Right cardiac atrium (tissue), 5 donors: ENCODE measurements at regions of chr9 and their contacts with region 1.

Region 1: DNA sequence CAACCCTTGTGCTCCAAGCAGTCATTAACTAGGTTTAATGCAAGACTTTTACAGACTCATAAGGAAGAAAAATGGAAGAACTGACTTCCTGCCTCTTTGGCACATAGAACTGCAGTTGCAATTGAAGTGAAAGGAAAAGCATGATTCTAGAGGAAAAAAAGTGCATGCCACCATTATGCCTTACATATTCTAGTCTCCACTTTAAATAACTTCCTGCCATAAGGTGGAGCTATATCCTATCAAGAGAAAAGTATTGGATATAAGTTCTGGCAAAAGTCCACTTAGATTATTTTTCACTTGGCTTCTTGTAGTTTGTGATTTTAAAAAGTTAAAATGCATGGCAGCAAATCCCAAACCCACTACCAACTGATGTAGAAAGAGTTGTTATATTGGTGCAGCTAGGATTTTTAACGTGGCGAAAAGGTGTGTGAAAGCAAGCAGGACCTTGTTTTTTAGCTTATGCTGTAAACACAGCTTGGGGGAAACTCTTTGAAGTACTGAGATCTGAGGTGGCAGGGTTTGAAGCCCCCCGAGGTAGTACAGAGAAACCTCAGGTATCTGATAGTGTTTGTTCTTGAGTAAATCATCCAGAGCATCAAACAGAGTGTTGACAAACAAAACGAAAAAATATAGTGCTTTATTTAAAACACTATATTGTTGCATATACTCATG is 117.9 kb downstream of the ANXA1 start:
- DNase-seq: no peak
- ATAC-seq: no peak
- H3K4me3 ChIP-seq: no peak overlapping the region
- H3K27ac ChIP-seq: no peak overlapping the region
- H3K4me1 ChIP-seq: no peaks in the 10 kb centered on the region
- H3K27me3 ChIP-seq: no peaks in the 10 kb centered on the region

Region 2: DNA sequence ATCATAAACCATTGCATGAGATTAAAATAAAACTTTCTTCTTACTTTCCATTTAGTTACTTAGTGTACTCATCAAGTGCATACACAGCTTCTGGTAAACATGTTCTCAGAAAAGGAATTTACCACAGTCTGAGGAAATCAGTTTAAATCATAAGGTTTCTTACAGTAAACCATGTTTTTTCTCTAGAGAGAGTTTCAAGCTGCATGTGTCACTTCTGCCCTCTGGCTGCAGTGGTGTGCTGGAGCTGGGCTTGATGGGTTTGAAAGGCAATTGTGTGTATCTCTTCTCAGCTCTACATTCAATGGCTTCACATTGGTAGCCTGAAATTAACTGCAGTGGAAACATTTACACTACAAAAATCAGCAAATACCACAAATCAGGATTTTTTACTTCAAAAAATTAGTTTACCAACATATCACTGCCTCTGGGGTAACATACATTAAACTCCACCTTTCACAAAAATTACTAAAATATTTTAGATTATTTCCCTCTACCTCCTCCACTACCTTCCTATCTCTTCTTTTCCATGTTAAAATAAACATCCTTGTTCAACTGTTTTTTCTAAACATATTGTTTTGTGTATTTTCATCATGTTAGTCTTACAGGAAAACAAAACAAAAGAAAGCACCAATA is 296.4 kb after region 1 on chr9:
- intact Hi-C with region 1: loop called in 1 of 4 experiments (anchors 5 kb)
- DNase-seq: peak in 2 of 3 donors; percentile 34 to 36
- ATAC-seq: no peak
- H3K4me3 ChIP-seq: no peak overlapping the region
- H3K27ac ChIP-seq: no peak overlapping the region
- H3K4me1 ChIP-seq: no peaks in the 10 kb centered on the region
- H3K27me3 ChIP-seq: no peaks in the 10 kb centered on the region